Mammary epithelial cell (primary cell): ENCODE measurements at regions of chr12 and their contacts with region 1.

Region 1: GRCh38 chr12:80763874-80764273 is 47.2 kb downstream of the MYF5 start:
- DNase-seq: peak; percentile 16
- H3K4me3 ChIP-seq: no peak overlapping the region
- H3K27ac ChIP-seq: no peak overlapping the region
- H3K4me1 ChIP-seq: no peaks in the 10 kb centered on the region
- H3K27me3 ChIP-seq: peaks cover 4% of the 10 kb centered on the region
- CTCF ChIP-seq: peak; percentile 39 to 64

Region 2: GRCh38 chr12:80313209-80313608 is 450.7 kb before region 1 on chr12:
- CTCF ChIA-PET with region 1: no interaction called
- dilution Hi-C with region 1: no loop called
- in situ Hi-C with region 1: no loop called
- intact Hi-C with region 1: loop called (anchors 2 kb)
- DNase-seq: no peak
- H3K4me3 ChIP-seq: no peak overlapping the region
- H3K27ac ChIP-seq: no peak overlapping the region
- H3K4me1 ChIP-seq: no peaks in the 10 kb centered on the region
- H3K27me3 ChIP-seq: peaks cover 2% of the 10 kb centered on the region
- CTCF ChIP-seq: peak; percentile 20 to 39

Region 3: DNA sequence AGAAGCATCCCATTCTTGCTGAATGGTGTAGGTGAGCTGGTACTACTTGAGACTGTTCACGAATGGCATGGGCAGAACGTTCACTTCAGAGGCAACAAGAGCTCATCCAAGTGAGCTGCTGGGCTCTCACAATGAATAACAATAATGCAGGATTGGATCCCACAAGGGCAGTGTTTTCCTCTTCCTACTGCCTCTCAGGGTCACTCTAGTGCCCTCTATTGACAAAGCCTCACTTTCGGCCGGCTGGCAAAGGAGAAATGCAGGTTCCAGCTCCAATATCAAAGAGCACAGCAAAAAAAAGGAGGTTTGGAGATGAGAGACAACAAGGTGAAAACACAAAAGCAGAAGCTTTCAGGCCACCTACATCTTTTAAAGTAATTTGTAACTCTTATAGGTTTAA is 131.0 kb before region 1 on chr12:
- CTCF ChIA-PET with region 1: no interaction called
- dilution Hi-C with region 1: no loop called
- in situ Hi-C with region 1: no loop called
- intact Hi-C with region 1: loop called (anchors 5 kb)
- DNase-seq: peak; percentile 29
- H3K4me3 ChIP-seq: no peak overlapping the region
- H3K27ac ChIP-seq: no peak overlapping the region
- H3K4me1 ChIP-seq: no peaks in the 10 kb centered on the region
- H3K27me3 ChIP-seq: no peaks in the 10 kb centered on the region
- CTCF ChIP-seq: peak; percentile 35 to 48

Region 4: GRCh38 chr12:80648881-80649280 is 115.0 kb before region 1 on chr12:
- CTCF ChIA-PET with region 1: no interaction called
- dilution Hi-C with region 1: no loop called
- in situ Hi-C with region 1: no loop called
- intact Hi-C with region 1: no loop called
- DNase-seq: peak; percentile 47
- H3K4me3 ChIP-seq: no peak overlapping the region
- H3K27ac ChIP-seq: no peak overlapping the region
- H3K4me1 ChIP-seq: no peaks in the 10 kb centered on the region
- H3K27me3 ChIP-seq: peaks cover 2% of the 10 kb centered on the region
- CTCF ChIP-seq: no peak